Gastrocnemius medialis (tissue), 4 donors: ENCODE measurements at regions of chr1 and their contacts with region 1.

Region 1: DNA sequence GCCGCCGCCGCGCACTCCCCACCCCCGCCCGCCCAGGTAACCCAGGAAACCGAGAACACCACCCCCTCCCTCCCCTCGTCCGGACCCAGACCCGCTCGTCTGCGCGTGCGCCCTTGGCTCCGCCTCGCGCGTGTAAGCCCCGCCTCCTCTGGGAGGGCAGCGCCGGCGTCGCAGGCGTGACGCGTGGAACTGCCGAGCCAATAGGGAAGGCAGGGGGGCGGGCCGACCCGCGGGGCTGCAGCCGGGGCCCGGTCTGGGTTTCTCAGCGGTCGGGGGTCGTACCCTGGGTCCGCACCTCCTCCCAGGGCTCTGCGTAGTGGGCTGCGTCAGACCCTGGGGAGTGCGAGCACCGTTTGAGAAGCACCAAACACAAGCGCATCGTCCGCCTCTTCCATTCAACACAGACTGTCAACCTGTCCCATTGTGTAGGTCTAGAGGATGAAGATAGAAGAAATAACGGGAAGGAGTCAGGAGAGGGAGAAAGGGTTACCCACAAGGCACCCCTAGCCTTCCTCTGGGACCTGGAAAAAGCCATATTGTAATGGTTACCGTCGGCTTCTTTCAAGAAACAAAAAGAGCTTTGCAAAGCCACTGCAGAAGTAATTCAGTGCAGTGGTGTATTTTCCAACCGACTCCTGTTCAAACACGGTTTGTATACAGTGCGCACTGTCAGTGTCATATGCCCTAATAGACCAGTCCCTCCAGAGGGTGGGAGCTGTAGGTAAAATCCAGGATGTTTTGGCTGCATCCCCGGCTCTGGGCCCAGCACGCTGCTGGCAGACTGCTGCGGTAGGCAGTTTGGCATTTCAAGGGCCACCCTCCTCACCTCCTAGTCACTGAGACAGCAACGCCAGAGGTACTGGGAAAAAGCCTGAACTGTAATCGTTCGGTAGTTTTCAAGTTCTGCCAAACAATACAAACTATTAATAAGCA is 473 bp upstream of the LYST start:
- DNase-seq: peak; percentile 92 to 93
- ATAC-seq: peak; percentile 93 to 94
- H3K4me3 ChIP-seq: peak overlapping the region; percentile 78 to 98 (median 86)
- H3K27ac ChIP-seq: peak overlapping the region; percentile 84 to 95 (median 92)
- H3K4me1 ChIP-seq: peaks cover 14 to 19% of the 10 kb centered on the region in 2 donors
- H3K27me3 ChIP-seq: no peaks in the 10 kb centered on the region
- CTCF ChIP-seq: no peak
- POLR2A ChIP-seq: peak; percentile 52 to 65

Region 2: GRCh38 chr1:235328357-235329138 is 538.6 kb before region 1 on chr1 and contains the start of gene GGPS1:
- in situ Hi-C with region 1: no loop called
- intact Hi-C with region 1: no loop called
- DNase-seq: peak; percentile 97 to 99
- ATAC-seq: peak; percentile 73 to 75
- H3K4me3 ChIP-seq: peak within 1 kb of the TSS; percentile 88 to 98 (median 95)
- H3K27ac ChIP-seq: peak within 1 kb of the TSS; percentile 94 to 98 (median 96)
- H3K4me1 ChIP-seq: peaks cover 57 to 61% of the 10 kb centered on the region in 2 donors
- H3K27me3 ChIP-seq: no peaks in the 10 kb centered on the region
- CTCF ChIP-seq: peak in 2 of 5 experiments; percentile 22 to 34
- POLR2A ChIP-seq: peak; percentile 74 to 81
- total RNA-seq, gene GGPS1: 14.5 to 21.9 (median 17.7) TPM

Region 3: DNA sequence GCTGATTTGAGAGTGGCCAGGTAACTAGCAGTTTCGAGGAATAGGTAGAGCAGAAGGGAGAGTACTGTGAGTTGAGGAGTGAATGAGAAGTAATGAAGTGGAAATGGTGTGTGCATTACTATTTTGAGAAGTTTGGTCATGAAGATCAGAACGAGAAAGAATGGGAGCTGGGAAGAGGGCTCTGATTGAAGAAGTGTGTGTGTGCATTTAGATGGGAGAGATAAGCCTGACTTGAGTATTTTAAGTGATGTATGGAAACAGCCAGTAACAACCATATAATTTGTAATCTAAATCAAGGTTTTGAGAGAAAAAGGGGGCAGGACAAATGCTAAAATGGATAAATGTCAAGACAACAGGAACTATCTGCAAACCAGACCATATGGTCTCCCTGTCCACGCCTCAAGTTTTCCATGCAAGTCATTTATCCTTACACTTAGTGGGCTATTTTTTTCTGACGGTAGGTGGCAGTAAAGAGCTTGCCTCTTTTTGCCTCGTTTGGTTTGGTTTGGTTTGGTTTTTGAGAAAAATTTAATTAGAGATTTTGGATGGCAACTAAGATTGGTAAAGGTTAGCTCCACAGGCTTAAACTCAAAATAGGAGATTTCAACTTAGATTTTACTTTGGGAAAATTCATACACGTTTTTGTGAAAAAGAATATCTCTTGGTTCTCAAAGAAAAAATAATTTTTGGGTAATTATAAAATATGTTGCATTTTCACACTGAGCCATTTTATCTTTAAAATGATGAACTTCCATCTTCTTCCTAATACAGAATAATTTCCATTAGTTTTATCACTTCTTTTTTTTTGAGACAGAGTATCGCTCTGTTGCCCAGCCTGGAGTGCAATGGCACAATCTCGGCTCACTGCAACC is 353.4 kb before region 1 on chr1:
- in situ Hi-C with region 1: no loop called
- intact Hi-C with region 1: loop called (anchors 5 kb)
- DNase-seq: no peak
- ATAC-seq: no peak
- H3K4me3 ChIP-seq: no peak overlapping the region
- H3K27ac ChIP-seq: no peak overlapping the region
- H3K4me1 ChIP-seq: no peaks in the 10 kb centered on the region
- H3K27me3 ChIP-seq: no peaks in the 10 kb centered on the region
- CTCF ChIP-seq: peak; percentile 61 to 92 (median 82)
- POLR2A ChIP-seq: no peak

Region 4: GRCh38 chr1:235971571-235972310 is 104.6 kb after region 1 on chr1:
- in situ Hi-C with region 1: no loop called
- intact Hi-C with region 1: loop called (anchors 2 kb)
- DNase-seq: peak; percentile 80 to 88
- ATAC-seq: peak; percentile 90 to 93
- H3K4me3 ChIP-seq: peak overlapping the region; percentile 35 to 57 (median 44)
- H3K27ac ChIP-seq: peak overlapping the region; percentile 76 to 81 (median 78)
- H3K4me1 ChIP-seq: peaks cover 5 to 6% of the 10 kb centered on the region in 2 donors
- H3K27me3 ChIP-seq: no peaks in the 10 kb centered on the region
- CTCF ChIP-seq: peak; percentile 54 to 76 (median 71)
- POLR2A ChIP-seq: peak in 1 of 2 donors; percentile 68

Region 5: GRCh38 chr1:236281654-236282424 is 414.7 kb after region 1 on chr1 and contains the start of gene ERO1B:
- in situ Hi-C with region 1: no loop called
- intact Hi-C with region 1: loop called (anchors 10 kb)
- DNase-seq: peak; percentile 92 to 95
- ATAC-seq: peak; percentile 95
- H3K4me3 ChIP-seq: peak within 1 kb of the TSS; percentile 82 to 96 (median 94)
- H3K27ac ChIP-seq: peak within 1 kb of the TSS; percentile 83 to 93 (median 87)
- H3K4me1 ChIP-seq: peaks cover 9% of the 10 kb centered on the region in 2 donors
- H3K27me3 ChIP-seq: peaks cover 0 to 5% (median 2%) of the 10 kb centered on the region in 3 donors
- CTCF ChIP-seq: no peak
- POLR2A ChIP-seq: peak; percentile 95 to 99
- total RNA-seq, gene ERO1B: 3.6 to 10.2 (median 5.8) TPM